ENCODE measurements at regions of chr2 and their contacts with region 1.

Region 1: DNA sequence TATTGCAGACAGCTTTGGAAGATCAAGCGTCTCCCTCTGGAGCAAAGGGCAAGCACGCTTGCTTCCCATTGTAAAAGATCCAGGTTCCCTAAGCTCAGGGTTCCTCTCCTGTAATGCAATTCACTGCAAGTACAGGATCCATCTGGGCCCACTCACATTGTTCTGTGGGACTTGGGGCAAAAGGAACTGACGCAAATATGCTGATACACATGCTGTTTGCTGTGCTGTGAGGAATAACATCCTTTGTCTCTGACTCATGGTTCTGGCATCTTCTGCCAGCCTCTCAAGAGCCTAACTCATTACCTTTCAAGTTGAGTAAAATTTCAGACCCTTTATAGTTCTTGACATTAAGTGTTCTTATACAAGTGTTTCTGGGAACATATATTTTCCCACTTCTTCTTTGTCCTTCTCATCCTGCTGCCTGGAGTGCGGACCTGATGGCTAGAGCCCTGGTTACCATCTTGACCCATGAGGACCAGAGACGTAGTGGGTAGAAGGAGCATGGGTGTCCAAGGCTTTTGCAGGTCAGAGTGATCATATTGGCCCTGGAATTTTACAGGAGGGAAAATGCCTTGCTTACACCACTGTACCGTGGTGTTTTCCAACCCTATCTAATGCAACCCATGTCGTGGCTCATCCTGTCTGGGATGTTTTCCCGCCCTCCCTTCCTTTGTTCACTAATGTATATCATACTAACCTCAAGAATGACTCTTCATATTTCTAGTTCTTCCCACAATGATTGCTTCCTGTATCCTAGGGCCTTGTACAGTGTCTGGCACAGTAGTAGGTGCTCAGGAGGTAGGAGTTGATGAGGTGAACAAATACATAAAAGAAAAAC is 145.7 kb upstream of the GLI2 start:
- DNase-seq: no peak
- ATAC-seq: no peak
- H3K4me3 ChIP-seq: no peak overlapping the region
- H3K4me3 Mint-ChIP-seq: no peak overlapping the region
- H3K27ac ChIP-seq: no peak overlapping the region
- H3K27ac Mint-ChIP-seq: no peak overlapping the region
- H3K4me1 ChIP-seq: no peaks in the 10 kb centered on the region
- H3K4me1 Mint-ChIP-seq: peaks cover 4% of the 10 kb centered on the region
- H3K27me3 ChIP-seq: peaks cover 2 to 6% of the 10 kb centered on the region in 2 experiments
- H3K27me3 Mint-ChIP-seq: peaks cover 31% of the 10 kb centered on the region
- CTCF ChIP-seq: no peak

Region 2: DNA sequence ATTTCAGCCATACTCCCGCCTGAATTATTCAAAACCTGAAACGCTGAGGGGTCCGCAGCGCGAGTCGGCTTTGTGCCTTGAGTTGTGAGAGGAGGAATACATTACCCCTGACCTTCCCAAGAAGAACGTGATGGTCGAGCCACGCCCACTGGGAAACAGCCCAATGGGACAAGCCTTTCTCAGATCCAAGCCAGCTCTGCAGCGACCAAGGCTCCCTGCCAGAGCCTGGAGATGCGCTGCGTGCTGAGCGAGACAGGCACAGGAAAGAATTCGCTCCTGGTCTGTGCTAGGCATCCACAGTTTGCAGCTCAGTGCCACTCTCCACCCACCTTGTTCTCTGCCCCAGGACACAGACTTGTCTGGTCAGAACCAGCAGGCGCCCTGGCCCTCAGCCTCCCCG is 71.6 kb after region 1 on chr2:
- CTCF ChIA-PET with region 1: no interaction called
- POLR2A ChIA-PET with region 1: no interaction called
- intact Hi-C with region 1: loop called in 1 of 2 experiments (anchors 2 kb)
- DNase-seq: no peak
- ATAC-seq: no peak
- H3K4me3 ChIP-seq: no peak overlapping the region
- H3K4me3 Mint-ChIP-seq: no peak overlapping the region
- H3K27ac ChIP-seq: no peak overlapping the region
- H3K27ac Mint-ChIP-seq: no peak overlapping the region
- H3K4me1 ChIP-seq: no peaks in the 10 kb centered on the region
- H3K4me1 Mint-ChIP-seq: no peaks in the 10 kb centered on the region
- H3K27me3 ChIP-seq: no peaks in the 10 kb centered on the region
- H3K27me3 Mint-ChIP-seq: peaks cover 14% of the 10 kb centered on the region
- CTCF ChIP-seq: no peak

Region 3: DNA sequence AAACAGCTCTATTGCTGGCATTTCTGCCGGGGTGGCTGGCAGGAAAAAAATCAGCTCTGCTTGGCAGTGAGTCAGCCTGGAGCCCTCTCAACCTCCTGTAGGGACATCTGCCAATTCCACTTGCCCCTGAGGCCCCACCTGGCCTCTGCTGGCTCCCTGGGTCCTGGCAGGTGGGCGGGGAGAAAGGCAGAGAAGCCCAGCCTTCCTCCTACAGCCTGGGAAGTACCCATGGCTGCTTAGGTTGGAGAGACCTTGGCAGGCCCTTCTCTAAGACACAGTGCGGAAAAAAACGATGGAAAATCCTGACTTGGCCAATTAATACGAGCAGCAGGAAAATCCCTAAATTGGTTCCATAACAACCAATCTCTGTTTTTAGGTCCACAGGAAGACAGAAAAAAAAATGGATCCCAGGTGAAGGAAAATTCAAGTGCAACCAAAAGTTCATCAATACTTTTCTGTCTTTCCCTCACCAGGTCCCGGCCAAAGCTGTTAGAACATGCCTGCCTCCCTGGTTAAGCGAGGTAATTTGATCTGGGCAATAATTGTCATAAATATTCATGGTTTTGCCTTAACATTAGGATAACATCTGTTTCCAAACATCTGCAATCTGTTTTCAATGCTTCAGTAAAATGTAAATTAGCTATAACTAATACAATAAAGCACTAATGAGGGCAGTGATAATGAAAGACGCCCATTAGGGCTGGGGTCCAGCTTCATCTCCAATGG is 449.1 kb after region 1 on chr2:
- CTCF ChIA-PET with region 1: no interaction called
- POLR2A ChIA-PET with region 1: no interaction called
- intact Hi-C with region 1: no loop called
- DNase-seq: peak in 1 of 9 experiments; percentile 31
- ATAC-seq: no peak
- H3K4me3 ChIP-seq: no peak overlapping the region
- H3K4me3 Mint-ChIP-seq: no peak overlapping the region
- H3K27ac ChIP-seq: no peak overlapping the region
- H3K27ac Mint-ChIP-seq: no peak overlapping the region
- H3K4me1 ChIP-seq: no peaks in the 10 kb centered on the region
- H3K4me1 Mint-ChIP-seq: no peaks in the 10 kb centered on the region
- H3K27me3 ChIP-seq: no peaks in the 10 kb centered on the region
- H3K27me3 Mint-ChIP-seq: peaks cover 5% of the 10 kb centered on the region
- CTCF ChIP-seq: no peak

Measured in CD8-positive, alpha-beta T cell (primary cell).